CD4-positive, alpha-beta memory T cell (primary cell): ENCODE measurements at regions of chr2 and their contacts with region 1.

Region 1: DNA sequence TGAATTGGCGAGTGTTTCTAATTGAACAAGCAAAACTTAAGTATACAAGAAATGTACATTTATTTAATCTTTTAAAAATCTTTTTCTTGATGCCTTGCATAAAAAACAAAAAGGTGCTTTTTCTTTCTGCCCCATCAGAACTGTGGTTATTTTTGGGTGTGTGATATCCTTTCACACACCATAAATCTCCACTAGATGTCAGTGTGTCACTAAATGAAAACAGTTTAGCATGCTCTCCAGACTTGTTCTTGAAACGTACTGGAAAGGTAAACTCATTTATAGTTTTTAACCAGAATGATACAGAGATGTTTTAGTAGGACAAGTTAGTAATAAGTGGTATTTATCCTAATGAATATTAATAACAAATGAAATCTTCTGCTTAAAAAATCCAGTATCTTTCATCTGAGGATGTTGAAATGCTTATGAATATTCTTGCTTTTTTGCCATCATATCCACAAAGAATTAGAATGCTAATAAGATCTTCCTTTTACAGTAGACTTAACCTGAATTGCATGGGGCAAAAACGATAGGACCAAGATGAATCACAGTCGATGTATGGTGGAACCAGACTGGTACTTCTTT is 96.8 kb downstream of the UBE2E3 start:
- DNase-seq: peak; percentile 36 to 69 (median 65)
- H3K4me3 ChIP-seq: no peak overlapping the region
- H3K4me3 Mint-ChIP-seq: no peak overlapping the region
- H3K27ac ChIP-seq: no peak overlapping the region
- H3K27ac Mint-ChIP-seq: no peak overlapping the region
- H3K4me1 ChIP-seq: no peaks in the 10 kb centered on the region
- H3K4me1 Mint-ChIP-seq: peaks cover 0 to 3% (median 2%) of the 10 kb centered on the region in 4 donors
- H3K27me3 ChIP-seq: no peaks in the 10 kb centered on the region
- H3K27me3 Mint-ChIP-seq: peaks cover 0 to 2% of the 10 kb centered on the region in 2 donors

Region 2: GRCh38 chr2:181374781-181375675 is 297.8 kb after region 1 on chr2:
- CTCF ChIA-PET with region 1: no interaction called
- POLR2A ChIA-PET with region 1: no interaction called
- intact Hi-C with region 1: no loop called
- DNase-seq: no peak
- H3K4me3 ChIP-seq: no peak overlapping the region
- H3K4me3 Mint-ChIP-seq: no peak overlapping the region
- H3K27ac ChIP-seq: no peak overlapping the region
- H3K27ac Mint-ChIP-seq: peak overlapping the region in 1 of 7 donors; percentile 19
- H3K4me1 ChIP-seq: peaks cover 28% of the 10 kb centered on the region
- H3K4me1 Mint-ChIP-seq: peaks cover 17 to 37% (median 29%) of the 10 kb centered on the region in 4 donors
- H3K27me3 ChIP-seq: no peaks in the 10 kb centered on the region
- H3K27me3 Mint-ChIP-seq: no peaks in the 10 kb centered on the region

Region 3: GRCh38 chr2:181904022-181904632 is 826.9 kb after region 1 on chr2:
- CTCF ChIA-PET with region 1: interaction called, 3 read pairs
- POLR2A ChIA-PET with region 1: no interaction called
- intact Hi-C with region 1: loop called (anchors 1 kb)
- DNase-seq: peak in 4 of 5 donors; percentile 21 to 37 (median 29)
- H3K4me3 ChIP-seq: no peak overlapping the region
- H3K4me3 Mint-ChIP-seq: no peak overlapping the region
- H3K27ac ChIP-seq: no peak overlapping the region
- H3K27ac Mint-ChIP-seq: peak overlapping the region in 1 of 7 donors; percentile 13
- H3K4me1 ChIP-seq: peaks cover 14% of the 10 kb centered on the region
- H3K4me1 Mint-ChIP-seq: peaks cover 13 to 20% (median 16%) of the 10 kb centered on the region in 4 donors
- H3K27me3 ChIP-seq: no peaks in the 10 kb centered on the region
- H3K27me3 Mint-ChIP-seq: no peaks in the 10 kb centered on the region